Gastrocnemius medialis (tissue), 4 donors: ENCODE measurements at regions of chr7 and their contacts with region 1.

Region 1: DNA sequence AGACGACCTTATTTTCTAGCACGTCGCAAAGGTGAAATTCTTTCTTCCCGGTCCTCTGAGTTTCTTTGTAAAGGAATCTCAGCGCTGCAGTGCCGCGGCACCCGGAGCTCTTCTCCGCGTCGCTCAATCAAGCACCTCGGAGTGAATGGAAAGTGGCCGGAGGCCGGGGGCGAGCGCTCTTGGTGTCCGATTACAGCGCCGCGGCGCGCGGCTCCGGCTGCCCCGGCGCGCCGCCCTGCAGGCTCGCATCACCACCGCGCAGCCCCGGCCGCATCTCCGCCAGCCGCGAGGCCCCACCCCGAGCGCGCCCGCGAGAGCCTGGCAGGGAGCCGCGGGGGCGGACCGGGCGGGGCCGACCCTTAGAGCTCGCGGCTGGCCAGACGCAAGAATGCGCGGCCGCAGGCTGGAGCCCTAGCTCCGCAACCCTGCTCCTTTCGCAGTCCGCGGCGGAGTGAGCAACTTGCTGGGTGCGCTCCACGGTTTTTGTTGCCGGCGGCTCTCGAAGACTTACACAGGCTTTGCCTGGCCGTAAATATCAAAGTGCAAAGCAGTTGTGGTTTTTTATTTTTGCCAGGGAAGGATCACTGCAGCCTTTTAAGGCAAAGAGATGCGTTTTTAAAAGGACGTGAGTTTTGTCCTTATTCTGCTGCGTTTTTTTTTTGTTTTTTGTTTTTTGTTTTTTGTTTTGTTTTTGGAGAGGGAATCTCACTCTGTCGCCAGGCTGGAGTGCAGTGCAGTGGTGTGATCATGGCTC is at the start of gene SEMA3C:
- DNase-seq: peak; percentile 76 to 90
- ATAC-seq: peak; percentile 89 to 92
- H3K4me3 ChIP-seq: peak within 1 kb of the TSS; percentile 67 to 89 (median 74)
- H3K27ac ChIP-seq: peak within 1 kb of the TSS; percentile 82 to 89 (median 84)
- H3K4me1 ChIP-seq: peaks cover 12 to 25% of the 10 kb centered on the region in 2 donors
- H3K27me3 ChIP-seq: no peaks in the 10 kb centered on the region
- CTCF ChIP-seq: no peak
- POLR2A ChIP-seq: peak; percentile 69 to 84
- total RNA-seq, gene SEMA3C: 5.4 to 58.5 (median 30.3) TPM

Region 2: GRCh38 chr7:80508440-80508839 is 410.6 kb before region 1 on chr7:
- in situ Hi-C with region 1: no loop called
- intact Hi-C with region 1: loop called (anchors 10 kb)
- DNase-seq: no peak
- ATAC-seq: no peak
- H3K4me3 ChIP-seq: no peak overlapping the region
- H3K27ac ChIP-seq: no peak overlapping the region
- H3K4me1 ChIP-seq: no peaks in the 10 kb centered on the region
- H3K27me3 ChIP-seq: no peaks in the 10 kb centered on the region
- CTCF ChIP-seq: no peak
- POLR2A ChIP-seq: no peak

Region 3: GRCh38 chr7:80593869-80594582 is 325.1 kb before region 1 on chr7:
- in situ Hi-C with region 1: no loop called
- intact Hi-C with region 1: no loop called
- DNase-seq: no peak
- ATAC-seq: no peak
- H3K4me3 ChIP-seq: peak overlapping the region in 1 of 4 donors; percentile 42
- H3K27ac ChIP-seq: peak overlapping the region in 2 of 4 donors; percentile 59 to 87
- H3K4me1 ChIP-seq: peaks cover 35 to 48% of the 10 kb centered on the region in 2 donors
- H3K27me3 ChIP-seq: no peaks in the 10 kb centered on the region
- CTCF ChIP-seq: no peak
- POLR2A ChIP-seq: peak in 1 of 2 donors; percentile 25

Region 4: DNA sequence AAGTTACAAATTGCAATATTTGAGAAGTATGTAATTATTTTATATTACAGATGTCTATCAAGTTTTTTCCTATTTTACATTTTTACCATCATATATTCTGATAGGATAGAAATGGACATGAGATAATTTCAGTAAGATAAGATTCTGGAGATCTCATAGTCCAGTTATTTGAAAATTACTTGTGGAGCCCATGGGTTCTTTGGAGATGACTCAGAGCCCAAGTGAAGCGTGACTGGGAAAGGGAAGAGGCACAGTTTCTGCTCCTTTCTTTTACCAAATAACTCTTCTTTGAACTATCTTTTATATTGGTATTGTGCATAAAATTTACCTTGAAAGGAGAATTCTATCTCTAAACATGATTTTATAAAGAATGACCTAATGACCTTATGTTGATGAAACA is 278.2 kb before region 1 on chr7:
- in situ Hi-C with region 1: no loop called
- intact Hi-C with region 1: loop called (anchors 10 kb)
- DNase-seq: no peak
- ATAC-seq: no peak
- H3K4me3 ChIP-seq: peak overlapping the region; percentile 27 to 48 (median 44)
- H3K27ac ChIP-seq: peak overlapping the region; percentile 82 to 92 (median 86)
- H3K4me1 ChIP-seq: peaks cover 29 to 44% of the 10 kb centered on the region in 2 donors
- H3K27me3 ChIP-seq: no peaks in the 10 kb centered on the region
- CTCF ChIP-seq: no peak
- POLR2A ChIP-seq: no peak

Region 5: DNA sequence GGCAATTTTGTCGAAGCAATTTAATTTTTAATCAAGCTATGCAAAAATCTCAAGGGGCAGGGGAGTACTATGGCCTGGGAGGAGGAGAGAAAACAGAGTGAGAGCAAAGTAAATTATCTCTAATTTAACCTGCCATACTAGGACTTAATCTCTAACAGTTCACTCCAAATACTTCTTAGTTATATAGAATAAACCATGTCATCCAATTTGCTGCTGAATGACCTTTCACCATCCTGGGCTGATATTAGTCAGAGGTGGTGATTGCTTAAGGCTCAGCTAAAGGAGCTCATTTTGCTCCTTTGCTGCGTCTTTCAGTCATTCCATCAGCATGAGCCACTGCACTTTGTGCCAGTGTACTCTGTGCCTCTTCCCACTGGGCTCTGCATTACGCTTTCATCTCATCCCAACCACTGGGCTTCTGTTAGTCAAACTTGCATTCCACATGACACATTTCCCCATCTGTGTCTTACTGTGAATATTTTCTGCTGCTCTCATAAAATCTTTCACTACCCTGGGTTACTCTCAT is 196.4 kb before region 1 on chr7:
- in situ Hi-C with region 1: no loop called
- intact Hi-C with region 1: loop called (anchors 10 kb)
- DNase-seq: peak; percentile 59 to 77
- ATAC-seq: peak; percentile 87 to 91
- H3K4me3 ChIP-seq: no peak overlapping the region
- H3K27ac ChIP-seq: peak overlapping the region in 2 of 4 donors; percentile 45 to 54
- H3K4me1 ChIP-seq: peaks cover 0 to 4% of the 10 kb centered on the region in 2 donors
- H3K27me3 ChIP-seq: no peaks in the 10 kb centered on the region
- CTCF ChIP-seq: no peak
- POLR2A ChIP-seq: no peak

Region 6: DNA sequence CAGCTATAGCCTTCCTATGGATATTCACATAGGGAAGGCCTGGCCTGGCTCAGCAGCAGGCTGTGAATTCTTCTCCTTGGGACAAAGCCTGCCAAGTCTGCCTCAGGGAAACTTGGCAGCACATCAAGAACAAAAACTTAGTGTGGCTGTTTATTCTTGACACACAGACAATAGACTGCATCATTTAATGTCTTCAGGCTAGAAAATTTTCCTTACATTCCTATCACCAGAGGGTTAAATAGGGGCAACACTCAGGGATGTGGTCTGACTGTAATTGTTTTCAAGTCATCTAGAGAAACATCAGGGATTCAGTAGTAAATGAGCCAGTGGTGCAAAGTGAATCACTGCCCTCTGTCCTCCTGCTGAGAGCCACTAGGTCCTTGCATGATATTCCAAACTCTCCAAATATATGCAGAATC is 137.5 kb before region 1 on chr7:
- in situ Hi-C with region 1: loop called in 1 of 4 experiments (anchors 10 kb)
- intact Hi-C with region 1: loop called (anchors 5 kb)
- DNase-seq: peak; percentile 44 to 61
- ATAC-seq: peak; percentile 87 to 93
- H3K4me3 ChIP-seq: no peak overlapping the region
- H3K27ac ChIP-seq: peak overlapping the region; percentile 21 to 76 (median 50)
- H3K4me1 ChIP-seq: peaks cover 20 to 48% of the 10 kb centered on the region in 2 donors
- H3K27me3 ChIP-seq: no peaks in the 10 kb centered on the region
- CTCF ChIP-seq: no peak
- POLR2A ChIP-seq: no peak

Region 7: DNA sequence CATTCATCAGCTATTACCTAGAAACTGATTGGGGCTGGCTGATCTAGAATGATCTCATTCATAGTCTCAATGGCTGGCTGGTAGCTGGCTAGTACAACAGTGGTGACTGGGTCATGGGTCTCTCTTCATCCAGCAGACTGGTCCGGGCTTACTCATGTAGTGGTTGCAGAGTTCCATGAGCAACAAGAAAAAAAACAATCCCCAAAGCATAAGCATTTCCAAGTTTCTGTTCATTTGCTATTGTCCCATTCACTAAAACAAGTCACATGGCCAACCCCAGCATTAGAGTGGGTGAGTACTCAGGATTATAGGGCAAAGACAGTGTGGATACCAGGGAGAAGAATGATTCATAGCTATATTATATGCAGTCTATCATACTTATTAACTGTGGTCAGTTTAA is 85.0 kb after region 1 on chr7:
- in situ Hi-C with region 1: no loop called
- intact Hi-C with region 1: no loop called
- DNase-seq: no peak
- ATAC-seq: no peak
- H3K4me3 ChIP-seq: no peak overlapping the region
- H3K27ac ChIP-seq: no peak overlapping the region
- H3K4me1 ChIP-seq: peaks cover 0 to 13% of the 10 kb centered on the region in 2 donors
- H3K27me3 ChIP-seq: no peaks in the 10 kb centered on the region
- CTCF ChIP-seq: no peak
- POLR2A ChIP-seq: no peak

Region 8: GRCh38 chr7:81256991-81257390 is 337.9 kb after region 1 on chr7:
- in situ Hi-C with region 1: loop called in 1 of 4 experiments (anchors 10 kb)
- intact Hi-C with region 1: no loop called
- DNase-seq: no peak
- ATAC-seq: no peak
- H3K4me3 ChIP-seq: no peak overlapping the region
- H3K27ac ChIP-seq: no peak overlapping the region
- H3K4me1 ChIP-seq: no peaks in the 10 kb centered on the region
- H3K27me3 ChIP-seq: no peaks in the 10 kb centered on the region
- CTCF ChIP-seq: peak in 1 of 5 experiments; percentile 33
- POLR2A ChIP-seq: no peak

Region 9: GRCh38 chr7:81469869-81470723 is 551.0 kb after region 1 on chr7:
- in situ Hi-C with region 1: loop called in 1 of 4 experiments (anchors 25 kb)
- intact Hi-C with region 1: no loop called
- DNase-seq: peak; percentile 23 to 40
- ATAC-seq: peak in 1 of 2 donors; percentile 55
- H3K4me3 ChIP-seq: no peak overlapping the region
- H3K27ac ChIP-seq: no peak overlapping the region
- H3K4me1 ChIP-seq: no peaks in the 10 kb centered on the region
- H3K27me3 ChIP-seq: no peaks in the 10 kb centered on the region
- CTCF ChIP-seq: peak; percentile 39 to 65 (median 50)
- POLR2A ChIP-seq: no peak